ENCODE measurements at regions of chr1 and their contacts with region 1.

Region 1: GRCh38 chr1:154567386-154568156 is at the start of gene CHRNB2:
- DNase-seq: peak; percentile 52 to 81 (median 65)
- ATAC-seq: peak; percentile 99
- H3K4me3 ChIP-seq: peak within 1 kb of the TSS in 1 of 2 experiments; percentile 46
- H3K4me3 Mint-ChIP-seq: no peak within 1 kb of the TSS
- H3K27ac ChIP-seq: no peak within 1 kb of the TSS
- H3K27ac Mint-ChIP-seq: no peak within 1 kb of the TSS
- H3K4me1 ChIP-seq: peaks cover 7% of the 10 kb centered on the region
- H3K4me1 Mint-ChIP-seq: peaks cover 5% of the 10 kb centered on the region
- H3K27me3 ChIP-seq: peaks cover 6 to 11% of the 10 kb centered on the region in 2 experiments
- H3K27me3 Mint-ChIP-seq: peaks cover 36% of the 10 kb centered on the region
- CTCF ChIP-seq: no peak
- total RNA-seq, gene CHRNB2: not detected

Region 2: DNA sequence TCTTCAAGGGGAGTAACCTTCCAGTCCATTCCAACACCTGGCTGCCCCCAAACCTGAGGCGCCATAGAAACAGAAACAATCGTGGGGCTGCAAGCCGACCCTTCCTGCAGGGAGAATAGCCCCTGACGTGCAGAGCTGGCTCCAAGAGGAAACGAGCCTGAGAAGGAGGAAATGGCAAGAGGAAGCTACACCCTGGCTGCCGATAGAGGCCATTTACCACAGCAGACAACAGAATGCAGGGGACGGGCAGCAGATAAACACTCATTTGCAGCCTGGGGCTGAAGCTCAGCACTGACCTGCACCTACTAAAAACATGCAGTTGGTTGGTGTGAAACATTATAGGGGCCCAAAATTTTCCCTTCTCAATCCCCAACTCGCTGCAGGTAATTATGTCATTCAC is 74.3 kb before region 1 on chr1:
- CTCF ChIA-PET with region 1: no interaction called
- POLR2A ChIA-PET with region 1: no interaction called
- intact Hi-C with region 1: no loop called
- DNase-seq: peak in 4 of 9 experiments; percentile 22 to 59 (median 44)
- ATAC-seq: peak; percentile 36
- H3K4me3 ChIP-seq: no peak overlapping the region
- H3K4me3 Mint-ChIP-seq: peak overlapping the region; percentile 73
- H3K27ac ChIP-seq: peak overlapping the region in 1 of 2 experiments; percentile 14
- H3K27ac Mint-ChIP-seq: no peak overlapping the region
- H3K4me1 ChIP-seq: peaks cover 36% of the 10 kb centered on the region
- H3K4me1 Mint-ChIP-seq: peaks cover 46% of the 10 kb centered on the region
- H3K27me3 ChIP-seq: no peaks in the 10 kb centered on the region
- H3K27me3 Mint-ChIP-seq: no peaks in the 10 kb centered on the region
- CTCF ChIP-seq: no peak

Region 3: GRCh38 chr1:154546264-154547063 is 21.1 kb before region 1 on chr1:
- CTCF ChIA-PET with region 1: no interaction called
- POLR2A ChIA-PET with region 1: no interaction called
- intact Hi-C with region 1: no loop called
- DNase-seq: peak; percentile 10 to 72 (median 52)
- ATAC-seq: peak; percentile 97
- H3K4me3 ChIP-seq: no peak overlapping the region
- H3K4me3 Mint-ChIP-seq: no peak overlapping the region
- H3K27ac ChIP-seq: no peak overlapping the region
- H3K27ac Mint-ChIP-seq: no peak overlapping the region
- H3K4me1 ChIP-seq: no peaks in the 10 kb centered on the region
- H3K4me1 Mint-ChIP-seq: peaks cover 15% of the 10 kb centered on the region
- H3K27me3 ChIP-seq: no peaks in the 10 kb centered on the region
- H3K27me3 Mint-ChIP-seq: peaks cover 3% of the 10 kb centered on the region
- CTCF ChIP-seq: peak; percentile 61

Region 4: GRCh38 chr1:154584267-154584994 is 16.9 kb after region 1 on chr1:
- CTCF ChIA-PET with region 1: no interaction called
- POLR2A ChIA-PET with region 1: no interaction called
- intact Hi-C with region 1: no loop called
- DNase-seq: no peak
- ATAC-seq: no peak
- H3K4me3 ChIP-seq: no peak overlapping the region
- H3K4me3 Mint-ChIP-seq: no peak overlapping the region
- H3K27ac ChIP-seq: no peak overlapping the region
- H3K27ac Mint-ChIP-seq: no peak overlapping the region
- H3K4me1 ChIP-seq: no peaks in the 10 kb centered on the region
- H3K4me1 Mint-ChIP-seq: no peaks in the 10 kb centered on the region
- H3K27me3 ChIP-seq: no peaks in the 10 kb centered on the region
- H3K27me3 Mint-ChIP-seq: no peaks in the 10 kb centered on the region
- CTCF ChIP-seq: no peak

Region 5: GRCh38 chr1:154599658-154600057 is 32.1 kb after region 1 on chr1:
- CTCF ChIA-PET with region 1: no interaction called
- POLR2A ChIA-PET with region 1: no interaction called
- intact Hi-C with region 1: loop called in 1 of 2 experiments (anchors 5 kb)
- DNase-seq: no peak
- ATAC-seq: no peak
- H3K4me3 ChIP-seq: no peak overlapping the region
- H3K4me3 Mint-ChIP-seq: no peak overlapping the region
- H3K27ac ChIP-seq: no peak overlapping the region
- H3K27ac Mint-ChIP-seq: peak overlapping the region; percentile 66
- H3K4me1 ChIP-seq: peaks cover 32% of the 10 kb centered on the region
- H3K4me1 Mint-ChIP-seq: peaks cover 44% of the 10 kb centered on the region
- H3K27me3 ChIP-seq: no peaks in the 10 kb centered on the region
- H3K27me3 Mint-ChIP-seq: no peaks in the 10 kb centered on the region
- CTCF ChIP-seq: no peak

Region 6: DNA sequence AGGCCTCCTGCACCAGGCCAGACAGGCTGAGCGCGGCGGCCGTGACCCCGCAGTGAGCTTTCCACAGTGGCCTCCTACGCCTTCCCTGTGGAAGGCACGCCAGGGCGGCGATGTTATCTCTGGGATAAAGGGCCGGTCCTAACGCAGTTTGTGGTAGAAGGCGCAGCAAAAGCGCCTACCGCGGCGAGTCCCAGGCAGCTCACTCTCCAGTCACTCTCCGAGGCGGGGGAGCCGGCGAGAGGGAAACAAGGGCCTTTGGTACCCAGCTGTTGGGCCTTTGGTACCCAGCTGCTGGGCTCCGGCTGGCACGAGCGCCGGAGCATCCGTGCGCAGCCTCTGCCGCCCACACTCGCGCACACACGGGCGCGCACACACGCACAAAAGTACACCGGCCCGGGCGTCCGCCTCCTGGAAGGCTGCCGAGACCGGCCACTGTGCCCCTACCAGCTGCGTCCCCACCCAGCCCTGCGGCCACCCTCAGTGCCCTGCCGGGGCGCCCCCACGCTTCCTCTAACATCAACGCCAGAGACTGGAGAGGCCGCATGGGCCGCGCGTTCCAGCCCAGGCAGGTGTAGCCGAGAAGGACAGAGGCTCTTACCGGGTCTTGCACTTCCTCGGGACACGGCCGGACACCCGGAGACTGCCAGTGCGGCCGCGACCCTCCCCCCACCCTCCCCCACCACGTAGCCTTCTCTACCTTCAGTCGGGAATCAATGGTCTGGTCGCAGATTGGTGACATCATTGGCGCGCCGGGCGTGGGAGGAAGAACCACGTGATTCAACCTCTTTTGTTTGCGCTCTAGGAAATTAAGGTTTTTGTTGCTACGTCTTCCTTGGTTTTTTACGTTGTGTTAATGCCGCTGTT is 59.9 kb after region 1 on chr1:
- CTCF ChIA-PET with region 1: no interaction called
- POLR2A ChIA-PET with region 1: no interaction called
- intact Hi-C with region 1: no loop called
- DNase-seq: peak; percentile 80 to 95 (median 92)
- ATAC-seq: peak; percentile 65
- H3K4me3 ChIP-seq: peak overlapping the region; percentile 93 to 94
- H3K4me3 Mint-ChIP-seq: peak overlapping the region; percentile 98
- H3K27ac ChIP-seq: peak overlapping the region; percentile 93 to 95
- H3K27ac Mint-ChIP-seq: peak overlapping the region; percentile 100
- H3K4me1 ChIP-seq: peaks cover 20% of the 10 kb centered on the region
- H3K4me1 Mint-ChIP-seq: peaks cover 43% of the 10 kb centered on the region
- H3K27me3 ChIP-seq: no peaks in the 10 kb centered on the region
- H3K27me3 Mint-ChIP-seq: peaks cover 8% of the 10 kb centered on the region
- CTCF ChIP-seq: no peak

Measured in CD8-positive, alpha-beta T cell (primary cell).